ENCODE measurements at regions of chr9 and their contacts with region 1.

Region 1: GRCh38 chr9:489198-490197 is 274.8 kb downstream of the DOCK8 start:
- DNase-seq: no peak
- ATAC-seq: no peak
- H3K4me3 ChIP-seq: no peak overlapping the region
- H3K27ac ChIP-seq: no peak overlapping the region
- H3K4me1 ChIP-seq: no peaks in the 10 kb centered on the region
- H3K27me3 ChIP-seq: no peaks in the 10 kb centered on the region
- CTCF ChIP-seq: no peak

Region 2: DNA sequence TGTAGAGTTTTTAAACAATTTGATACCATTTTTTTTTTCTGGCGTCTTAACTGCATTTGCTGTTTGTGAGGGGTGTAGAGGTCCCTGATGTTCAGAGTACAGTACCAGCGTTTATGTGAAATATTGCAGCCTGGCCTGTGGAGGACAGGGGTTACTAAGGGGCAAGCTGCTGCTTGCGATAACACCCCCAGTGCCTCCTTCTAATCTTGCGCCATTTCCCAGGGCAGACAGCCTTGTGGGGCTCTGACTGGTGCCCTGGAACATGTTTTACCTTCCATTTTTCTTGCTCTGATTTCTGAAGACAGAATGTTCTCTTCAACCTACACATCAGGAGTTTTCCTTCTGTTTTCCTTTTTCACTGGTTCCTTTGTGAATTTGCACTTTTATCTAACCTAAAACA is 131.9 kb before region 1 on chr9:
- intact Hi-C with region 1: no loop called
- DNase-seq: no peak
- ATAC-seq: no peak
- H3K4me3 ChIP-seq: no peak overlapping the region
- H3K27ac ChIP-seq: no peak overlapping the region
- H3K4me1 ChIP-seq: peaks cover 0 to 10% (median 0%) of the 10 kb centered on the region in 9 donors
- H3K27me3 ChIP-seq: peaks cover 0 to 4% (median 0%) of the 10 kb centered on the region in 7 donors
- CTCF ChIP-seq: no peak

Region 3: GRCh38 chr9:419571-420402 is 69.7 kb before region 1 on chr9:
- intact Hi-C with region 1: no loop called
- DNase-seq: no peak
- ATAC-seq: no peak
- H3K4me3 ChIP-seq: no peak overlapping the region
- H3K27ac ChIP-seq: no peak overlapping the region
- H3K4me1 ChIP-seq: no peaks in the 10 kb centered on the region
- H3K27me3 ChIP-seq: no peaks in the 10 kb centered on the region
- CTCF ChIP-seq: no peak

Region 4: DNA sequence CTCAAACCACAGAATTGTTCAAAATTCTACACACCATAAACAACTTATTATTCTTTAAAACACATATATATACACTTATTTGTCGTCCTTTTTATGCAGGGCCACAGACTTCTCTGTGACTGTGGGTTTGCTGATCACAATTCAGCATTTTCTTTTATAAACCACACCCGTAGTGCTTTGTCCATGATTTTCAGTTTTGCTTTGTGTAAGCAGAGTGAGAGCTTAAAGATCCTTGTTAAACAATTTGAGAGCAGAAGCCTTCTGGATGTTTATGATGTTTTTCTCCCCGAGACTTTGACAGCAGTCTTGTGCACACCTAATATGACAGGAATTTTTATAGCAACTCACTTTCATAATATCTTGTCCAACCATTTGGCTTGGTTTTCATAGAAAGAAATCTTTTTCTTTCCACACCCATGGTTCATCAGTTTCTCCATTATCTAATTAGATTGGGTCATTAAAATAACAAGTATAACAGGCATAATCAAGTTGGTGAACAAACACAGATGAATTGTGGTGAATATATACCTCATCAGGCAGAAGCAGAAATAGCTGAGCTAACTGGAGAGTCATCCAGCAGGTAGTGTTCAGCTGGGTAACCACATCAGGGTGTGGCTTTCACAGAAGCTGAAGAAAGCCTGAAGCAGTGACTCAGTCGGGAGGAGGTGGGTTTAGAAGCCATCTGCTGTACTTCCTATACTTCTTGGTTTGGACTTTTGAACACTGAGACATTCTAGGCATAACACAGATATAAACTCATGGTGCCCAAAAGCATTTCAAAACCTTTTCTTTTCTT is 42.1 kb before region 1 on chr9:
- intact Hi-C with region 1: no loop called
- DNase-seq: no peak
- ATAC-seq: no peak
- H3K4me3 ChIP-seq: no peak overlapping the region
- H3K27ac ChIP-seq: no peak overlapping the region
- H3K4me1 ChIP-seq: peaks cover 0 to 12% (median 5%) of the 10 kb centered on the region in 9 donors
- H3K27me3 ChIP-seq: no peaks in the 10 kb centered on the region
- CTCF ChIP-seq: no peak

Region 5: DNA sequence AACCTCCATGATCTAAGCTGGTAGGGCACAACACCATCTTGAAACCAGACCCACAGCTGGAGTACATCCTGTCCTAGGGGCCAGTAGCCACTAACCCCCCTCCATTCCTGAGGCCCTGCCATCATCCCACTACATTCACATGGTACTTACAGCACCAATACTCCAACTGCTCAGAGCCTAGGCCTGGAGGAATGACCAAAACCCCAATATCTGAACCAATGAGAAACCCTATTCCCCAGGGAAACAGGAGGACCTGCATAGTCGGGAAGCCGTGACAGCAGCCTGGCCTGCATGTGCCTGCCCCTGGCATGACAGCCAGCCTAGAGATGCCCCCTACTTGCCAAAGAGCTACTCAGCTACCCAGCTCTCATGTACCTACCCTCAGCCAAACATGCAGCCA is 286.6 kb after region 1 on chr9:
- intact Hi-C with region 1: loop called in 1 of 10 experiments (anchors 10 kb)
- DNase-seq: no peak
- ATAC-seq: no peak
- H3K4me3 ChIP-seq: no peak overlapping the region
- H3K27ac ChIP-seq: no peak overlapping the region
- H3K4me1 ChIP-seq: no peaks in the 10 kb centered on the region
- H3K27me3 ChIP-seq: no peaks in the 10 kb centered on the region
- CTCF ChIP-seq: no peak